ENCODE measurements at regions of chr10 and their contacts with region 1.

Region 1: DNA sequence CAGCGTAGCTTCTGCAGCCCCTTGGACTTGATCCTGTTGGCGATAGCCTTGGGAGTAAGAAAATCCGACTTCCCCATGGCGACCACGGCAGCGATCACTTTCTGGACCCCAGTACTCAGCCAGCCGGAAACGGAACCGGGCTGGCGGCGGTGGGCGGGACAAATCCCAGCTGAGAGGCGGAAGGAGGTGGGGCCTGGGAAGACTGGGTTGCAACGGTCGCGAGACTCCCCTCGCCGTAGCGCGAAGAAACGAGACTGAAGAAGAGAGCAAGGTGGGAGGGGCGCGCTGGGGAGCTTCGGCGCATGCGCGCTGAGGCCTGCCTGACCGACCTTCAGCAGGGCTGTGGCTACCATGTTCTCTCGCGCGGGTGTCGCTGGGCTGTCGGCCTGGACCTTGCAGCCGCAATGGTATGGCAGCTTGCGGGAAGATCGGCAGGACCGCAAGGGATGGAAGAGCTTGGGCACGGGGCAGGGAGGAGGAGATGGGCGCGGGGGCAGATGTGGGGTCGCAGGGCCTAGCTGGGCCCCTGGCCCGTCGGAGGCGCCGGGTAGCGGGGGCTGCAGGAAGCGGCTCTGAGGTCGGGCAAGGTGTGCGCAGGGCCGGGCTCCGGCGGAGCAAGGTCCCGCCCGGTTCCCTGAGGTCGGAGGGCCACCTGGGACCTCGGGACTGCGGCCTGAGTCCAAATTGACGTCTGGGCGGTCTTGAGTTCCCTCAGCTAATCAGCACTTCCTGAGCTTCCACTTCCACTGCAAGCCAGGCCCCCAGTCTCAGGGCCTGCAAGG is at the starts of genes ATP5F1C and KIN:
- DNase-seq: peak; percentile 96
- H3K4me3 ChIP-seq: peak within 1 kb of the TSS; percentile 88 to 99 (median 96)
- H3K27ac ChIP-seq: peak within 1 kb of the TSS; percentile 85 to 89
- H3K4me1 ChIP-seq: peaks cover 0 to 6% of the 10 kb centered on the region in 2 donors
- H3K27me3 ChIP-seq: no peaks in the 10 kb centered on the region
- CTCF ChIP-seq: no peak
- POLR2A ChIP-seq: peak; percentile 34
- total RNA-seq, gene ATP5F1C: 224 to 245 (median 224) TPM
- total RNA-seq, gene KIN: 5.9 to 13.3 (median 9.5) TPM

Region 2: DNA sequence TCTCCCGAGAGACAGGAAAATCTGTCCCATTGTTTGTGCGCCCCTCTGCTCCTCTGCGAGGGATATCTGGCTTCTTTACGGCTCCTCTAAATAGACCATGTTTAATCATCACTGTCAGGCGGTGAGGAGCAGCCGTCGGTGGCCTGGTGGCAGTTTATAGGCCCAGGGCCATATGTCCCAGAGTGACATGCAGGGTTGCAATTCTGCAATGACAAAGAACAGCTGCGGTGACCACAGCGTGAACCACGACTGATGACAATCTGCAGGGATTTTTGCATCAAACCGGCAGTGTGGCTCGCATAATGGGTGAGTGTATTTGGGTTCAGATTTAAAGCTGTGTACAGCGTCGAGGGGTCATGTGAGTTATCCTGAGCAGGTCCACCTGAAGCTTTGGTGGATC is 307.9 kb after region 1 on chr10:
- intact Hi-C with region 1: loop called (anchors 2 kb)
- DNase-seq: no peak
- H3K4me3 ChIP-seq: no peak overlapping the region
- H3K27ac ChIP-seq: no peak overlapping the region
- H3K4me1 ChIP-seq: no peaks in the 10 kb centered on the region
- H3K27me3 ChIP-seq: no peaks in the 10 kb centered on the region
- CTCF ChIP-seq: no peak
- POLR2A ChIP-seq: no peak